PC-9 (cell line): ENCODE measurements at regions of chr7 and their contacts with region 1.

Region 1: DNA sequence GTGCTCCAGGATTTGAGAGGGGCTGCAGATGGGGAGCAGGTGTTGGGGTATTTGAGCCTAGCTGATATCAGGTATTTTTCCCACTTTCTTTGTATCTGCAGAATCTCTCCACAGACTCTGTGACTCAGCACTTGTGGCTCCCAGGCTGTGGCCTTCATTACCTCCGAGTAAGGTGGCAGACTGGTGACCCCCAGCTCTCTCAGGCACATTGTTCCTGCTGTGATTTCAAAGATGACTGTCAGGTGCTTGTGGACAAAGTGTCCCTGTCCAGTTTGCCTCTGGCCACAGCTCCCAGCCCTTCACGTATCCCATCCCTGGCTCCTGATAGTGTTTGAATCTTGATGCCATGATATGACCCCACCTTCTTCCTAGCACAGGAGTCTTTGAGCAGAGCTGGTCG is 396.8 kb upstream of the PODXL start:
- DNase-seq: peak in 1 of 2 experiments; percentile 23
- H3K4me3 ChIP-seq: no peak overlapping the region
- H3K27ac ChIP-seq: no peak overlapping the region
- H3K4me1 ChIP-seq: peaks cover 26% of the 10 kb centered on the region
- H3K27me3 ChIP-seq: no peaks in the 10 kb centered on the region
- CTCF ChIP-seq: no peak

Region 2: GRCh38 chr7:131995328-131995727 is 42.1 kb after region 1 on chr7:
- CTCF ChIA-PET with region 1: no interaction called
- POLR2A ChIA-PET with region 1: interaction called, 10 read pairs
- intact Hi-C with region 1: no loop called
- DNase-seq: no peak
- H3K4me3 ChIP-seq: no peak overlapping the region
- H3K27ac ChIP-seq: no peak overlapping the region
- H3K4me1 ChIP-seq: no peaks in the 10 kb centered on the region
- H3K27me3 ChIP-seq: peaks cover 9% of the 10 kb centered on the region; the same call in 1 of the 2 replicates
- CTCF ChIP-seq: no peak